ENCODE measurements at regions of chrX and their contacts with region 1.

Region 1: DNA sequence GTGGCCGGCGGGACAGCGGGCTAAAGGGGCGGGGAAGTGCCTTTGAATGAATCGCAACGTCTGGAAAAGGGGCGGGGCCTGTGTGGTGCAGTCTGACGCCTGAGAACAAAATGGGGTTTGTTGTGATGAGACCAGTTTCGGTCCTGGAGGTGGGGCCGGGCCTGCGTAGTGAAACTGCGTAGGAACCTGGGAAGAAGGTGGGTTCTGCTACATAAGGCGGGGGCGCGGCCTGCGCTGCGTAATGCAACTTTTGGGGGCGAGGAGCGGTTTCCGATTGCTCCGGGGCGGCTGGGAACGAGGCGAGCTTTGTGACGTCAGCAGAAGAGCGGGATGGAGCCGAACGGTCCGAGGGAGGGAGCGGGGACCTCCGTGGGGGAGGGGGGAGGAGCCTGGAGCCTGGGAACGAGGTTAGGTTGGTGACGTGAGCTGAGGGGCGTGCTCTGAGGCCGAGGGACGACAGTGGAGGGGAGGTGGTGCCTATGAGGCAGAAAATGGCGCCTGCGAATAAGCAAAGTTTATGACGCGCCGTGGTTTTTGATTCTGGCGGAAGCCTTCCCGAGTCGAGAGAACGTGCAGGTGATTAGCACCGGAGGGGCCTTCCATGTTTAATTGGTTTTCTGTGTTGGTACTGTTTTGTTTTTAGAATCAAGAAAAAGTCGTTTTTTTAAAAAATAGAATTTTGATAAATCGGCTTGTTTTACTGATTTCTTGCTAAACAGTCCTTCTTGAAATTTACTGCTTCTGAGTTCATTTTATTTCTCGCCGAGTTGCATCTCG is 716 bp downstream of the USP11 start:
- DNase-seq: peak; percentile 93 to 96
- H3K4me3 ChIP-seq: peak overlapping the region; percentile 73
- H3K4me3 Mint-ChIP-seq: peak overlapping the region; percentile 88
- H3K27ac Mint-ChIP-seq: peak overlapping the region; percentile 99
- H3K4me1 ChIP-seq: no peaks in the 10 kb centered on the region
- H3K4me1 Mint-ChIP-seq: peaks cover 14% of the 10 kb centered on the region
- H3K27me3 ChIP-seq: no peaks in the 10 kb centered on the region
- H3K27me3 Mint-ChIP-seq: no peaks in the 10 kb centered on the region
- CTCF ChIP-seq: no peak

Region 2: DNA sequence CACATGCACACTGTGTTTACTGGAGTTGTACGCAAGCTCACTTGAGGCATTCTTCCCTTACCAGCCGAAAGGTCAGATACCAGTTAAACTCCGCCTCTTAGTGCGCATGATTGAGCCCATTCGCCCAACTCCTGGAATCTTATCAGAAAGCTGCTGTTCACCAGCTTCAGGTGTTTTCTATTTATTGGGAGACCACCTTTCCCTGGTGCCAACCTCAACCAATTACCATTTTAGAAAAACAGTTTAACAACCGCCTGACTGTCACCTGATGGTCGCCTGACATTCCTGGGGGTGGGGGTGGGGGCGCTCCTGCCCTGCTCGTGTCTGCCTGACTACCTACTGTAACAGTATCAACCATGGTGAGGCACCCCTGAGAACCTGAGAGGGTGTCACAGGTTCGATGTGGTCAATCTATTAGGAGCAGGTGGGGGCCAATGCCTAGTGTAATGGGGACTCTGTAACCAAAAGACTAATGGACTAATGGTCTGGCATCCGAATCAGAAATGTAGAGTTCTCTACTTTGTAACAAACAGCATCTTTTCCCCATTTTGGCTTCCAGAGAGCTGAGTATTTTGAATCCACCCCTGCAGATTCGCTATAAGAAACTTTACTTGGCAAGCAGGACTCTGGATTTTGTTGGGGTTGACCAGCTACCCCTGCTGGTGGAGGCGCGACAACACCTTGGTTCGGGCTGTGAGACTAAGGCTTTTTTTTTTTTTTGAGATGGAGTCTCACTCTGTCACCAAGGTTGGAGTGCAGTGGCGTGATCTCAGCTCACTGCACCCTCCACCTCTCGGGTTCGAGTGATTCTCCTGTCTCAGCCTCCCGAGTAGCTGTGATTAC is 78.6 kb after region 1 on chrX:
- CTCF ChIA-PET with region 1: interaction called, 7 read pairs
- POLR2A ChIA-PET with region 1: interaction called, 5 read pairs
- intact Hi-C with region 1: loop called (anchors 1 kb)
- DNase-seq: peak; percentile 54 to 65
- H3K4me3 ChIP-seq: no peak overlapping the region
- H3K4me3 Mint-ChIP-seq: no peak overlapping the region
- H3K27ac Mint-ChIP-seq: no peak overlapping the region
- H3K4me1 ChIP-seq: no peaks in the 10 kb centered on the region
- H3K4me1 Mint-ChIP-seq: no peaks in the 10 kb centered on the region
- H3K27me3 ChIP-seq: no peaks in the 10 kb centered on the region
- H3K27me3 Mint-ChIP-seq: no peaks in the 10 kb centered on the region
- CTCF ChIP-seq: peak; percentile 58 to 63

Measured in Caco-2 (cell line).